ENCODE measurements at regions of chr17 and their contacts with region 1.

Region 1: DNA sequence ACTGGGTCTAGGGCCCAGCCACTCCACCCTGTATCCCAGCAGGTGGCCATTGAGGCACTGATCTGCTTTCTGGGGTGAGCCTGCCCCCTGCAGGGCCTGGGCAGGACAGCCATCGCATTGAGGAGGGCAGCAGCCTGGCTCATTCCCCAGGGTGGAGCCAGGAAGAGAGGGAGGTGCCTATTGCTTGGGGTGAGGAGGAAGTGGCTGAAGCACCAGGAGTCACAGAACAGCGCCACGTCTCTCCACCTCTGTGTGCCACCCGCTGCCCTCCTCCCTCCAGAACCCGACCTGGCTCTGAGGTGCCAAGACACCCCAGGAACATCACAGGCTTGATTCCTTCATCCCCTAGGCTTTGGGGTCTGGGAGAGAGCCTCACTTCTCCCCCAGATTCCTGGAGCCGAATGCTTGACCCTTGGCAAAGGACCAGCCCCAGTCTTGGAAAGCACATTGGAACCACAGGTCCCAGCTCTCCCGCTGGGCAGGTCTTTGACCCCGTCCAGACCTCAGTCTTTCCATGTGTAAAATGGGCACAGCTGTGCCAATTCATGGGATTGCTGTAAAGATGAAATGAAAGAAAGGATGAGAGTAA is 7.2 kb upstream of the KRT36 start:
- DNase-seq: peak; percentile 83
- H3K4me3 ChIP-seq: no peak overlapping the region
- H3K27ac ChIP-seq: no peak overlapping the region
- H3K4me1 ChIP-seq: peaks cover 38% of the 10 kb centered on the region
- H3K27me3 ChIP-seq: no peaks in the 10 kb centered on the region
- CTCF ChIP-seq: peak; percentile 91 to 92
- POLR2A ChIP-seq: no peak

Region 2: GRCh38 chr17:40803617-40804082 is 693.3 kb before region 1 on chr17:
- CTCF ChIA-PET with region 1: no interaction called
- POLR2A ChIA-PET with region 1: no interaction called
- dilution Hi-C with region 1: no loop called
- intact Hi-C with region 1: loop called (anchors 10 kb)
- DNase-seq: peak; percentile 71
- H3K4me3 ChIP-seq: no peak overlapping the region
- H3K27ac ChIP-seq: no peak overlapping the region
- H3K4me1 ChIP-seq: no peaks in the 10 kb centered on the region
- H3K27me3 ChIP-seq: peaks cover 20 to 39% of the 10 kb centered on the region in 2 experiments
- CTCF ChIP-seq: peak; percentile 85 to 88
- POLR2A ChIP-seq: no peak

Region 3: GRCh38 chr17:41403798-41404671 is 92.9 kb before region 1 on chr17:
- CTCF ChIA-PET with region 1: no interaction called
- POLR2A ChIA-PET with region 1: no interaction called
- dilution Hi-C with region 1: no loop called
- intact Hi-C with region 1: loop called (anchors 10 kb)
- DNase-seq: peak; percentile 48
- H3K4me3 ChIP-seq: peak overlapping the region in 1 of 3 experiments; percentile 9
- H3K27ac ChIP-seq: peak overlapping the region; percentile 16
- H3K4me1 ChIP-seq: peaks cover 18% of the 10 kb centered on the region
- H3K27me3 ChIP-seq: peaks cover 8 to 12% of the 10 kb centered on the region in 2 experiments
- CTCF ChIP-seq: no peak
- POLR2A ChIP-seq: no peak